Esophagus muscularis mucosa (tissue), 4 donors: ENCODE measurements at regions of chr1 and their contacts with region 1.

Region 1: GRCh38 chr1:240691521-240692338 is 79.8 kb upstream of the GREM2 start:
- DNase-seq: no peak
- H3K4me3 ChIP-seq: no peak overlapping the region
- H3K27ac ChIP-seq: no peak overlapping the region
- H3K4me1 ChIP-seq: peaks cover 0 to 25% (median 21%) of the 10 kb centered on the region in 4 donors
- H3K27me3 ChIP-seq: no peaks in the 10 kb centered on the region
- CTCF ChIP-seq: peak; percentile 63 to 68 (median 65)
- EP300 ChIP-seq: no peak
- POLR2A ChIP-seq: no peak

Region 2: DNA sequence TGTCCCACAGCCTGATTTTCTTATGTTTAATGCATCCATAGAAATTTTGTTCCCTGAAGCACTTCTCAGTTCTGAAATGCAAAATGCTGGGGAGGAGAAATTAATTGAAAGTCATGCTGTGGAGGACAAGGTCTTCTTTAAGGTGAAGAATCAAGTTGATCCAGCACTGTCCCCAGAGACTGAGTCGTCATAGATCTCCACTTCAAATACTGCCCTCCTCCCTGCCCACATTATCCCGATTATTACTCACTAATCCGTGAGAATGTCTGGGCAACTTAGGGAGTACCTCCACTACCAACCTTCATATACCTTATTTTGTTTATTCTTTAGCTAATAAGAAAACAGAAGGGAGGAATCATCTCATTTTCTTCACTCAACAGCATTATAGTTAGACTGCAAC is 670.0 kb before region 1 on chr1:
- intact Hi-C with region 1: loop called (anchors 5 kb)
- DNase-seq: no peak
- H3K4me3 ChIP-seq: no peak overlapping the region
- H3K27ac ChIP-seq: no peak overlapping the region
- H3K4me1 ChIP-seq: no peaks in the 10 kb centered on the region
- H3K27me3 ChIP-seq: no peaks in the 10 kb centered on the region
- CTCF ChIP-seq: no peak
- EP300 ChIP-seq: no peak
- POLR2A ChIP-seq: no peak

Region 3: GRCh38 chr1:240190881-240191401 is 500.8 kb before region 1 on chr1:
- intact Hi-C with region 1: loop called (anchors 2 kb)
- DNase-seq: no peak
- H3K4me3 ChIP-seq: no peak overlapping the region
- H3K27ac ChIP-seq: peak overlapping the region in 1 of 4 donors; percentile 14
- H3K4me1 ChIP-seq: peaks cover 0 to 18% (median 14%) of the 10 kb centered on the region in 4 donors
- H3K27me3 ChIP-seq: peaks cover 0 to 4% (median 0%) of the 10 kb centered on the region in 4 donors
- CTCF ChIP-seq: peak; percentile 42 to 58 (median 55)
- EP300 ChIP-seq: no peak
- POLR2A ChIP-seq: no peak